ENCODE measurements at regions of chr15 and their contacts with region 1.

Region 1: DNA sequence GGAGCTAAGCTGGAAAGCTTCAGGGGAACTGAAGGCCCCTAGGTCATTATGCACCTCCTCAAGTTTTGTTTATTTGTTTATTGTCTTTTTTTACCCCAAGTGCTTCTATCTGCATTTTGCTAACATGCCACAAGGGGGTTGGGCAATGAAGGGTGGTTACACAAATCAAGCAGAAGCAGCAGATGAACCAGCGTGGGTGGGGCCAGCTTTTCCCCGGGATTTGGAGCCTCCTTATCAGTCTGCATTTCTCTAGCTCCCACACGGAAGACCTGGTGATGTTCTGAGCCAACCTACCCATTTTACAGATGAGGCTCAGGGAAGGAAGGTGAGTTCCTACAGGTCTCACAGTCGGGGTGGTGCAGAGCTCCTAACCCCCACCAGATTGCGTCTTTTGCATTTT is 16.8 kb downstream of the TMC3 start:
- DNase-seq: no peak
- H3K4me3 ChIP-seq: no peak overlapping the region
- H3K27ac ChIP-seq: no peak overlapping the region
- H3K4me1 ChIP-seq: no peaks in the 10 kb centered on the region
- H3K27me3 ChIP-seq: peaks cover 5% of the 10 kb centered on the region
- CTCF ChIP-seq: no peak

Region 2: GRCh38 chr15:81286621-81287121 is 70.6 kb before region 1 on chr15:
- CTCF ChIA-PET with region 1: no interaction called
- dilution Hi-C with region 1: loop called (anchors 5 kb)
- in situ Hi-C with region 1: no loop called
- intact Hi-C with region 1: no loop called
- DNase-seq: no peak
- H3K4me3 ChIP-seq: no peak overlapping the region
- H3K27ac ChIP-seq: no peak overlapping the region
- H3K4me1 ChIP-seq: no peaks in the 10 kb centered on the region
- H3K27me3 ChIP-seq: no peaks in the 10 kb centered on the region
- CTCF ChIP-seq: no peak